Activated T-helper 2 cell treated with anti-CD3 and anti-CD28 coated beads, Interferon-gamma antibody, Interleukin-2, Interleukin-4, amounts not matched to agents 10 μg/mL and 5 μg/mL and 100 μg/mL, durations not matched to agents 14 hours and 24 hours and 36 hours (primary cell): ENCODE measurements at regions of chr9 and their contacts with region 1.

Region 1: GRCh38 chr9:127555768-127556397 is 56.2 kb upstream of the STXBP1 start:
- DNase-seq: peak; percentile 65
- H3K4me3 Mint-ChIP-seq: peak overlapping the region; percentile 19
- H3K27ac Mint-ChIP-seq: peak overlapping the region; percentile 73
- H3K4me1 Mint-ChIP-seq: peaks cover 38% of the 10 kb centered on the region
- H3K27me3 Mint-ChIP-seq: no peaks in the 10 kb centered on the region

Region 2: GRCh38 chr9:127578955-127579853 is 23.3 kb after region 1 on chr9:
- intact Hi-C with region 1: loop called (anchors 2 kb)
- DNase-seq: peak; percentile 70
- H3K4me3 Mint-ChIP-seq: peak overlapping the region; percentile 87
- H3K27ac Mint-ChIP-seq: peak overlapping the region; percentile 90
- H3K4me1 Mint-ChIP-seq: peaks cover 42% of the 10 kb centered on the region
- H3K27me3 Mint-ChIP-seq: no peaks in the 10 kb centered on the region

Region 3: GRCh38 chr9:127651697-127652610 is 96.1 kb after region 1 on chr9:
- intact Hi-C with region 1: no loop called
- DNase-seq: no peak
- H3K4me3 Mint-ChIP-seq: no peak overlapping the region
- H3K27ac Mint-ChIP-seq: no peak overlapping the region
- H3K4me1 Mint-ChIP-seq: no peaks in the 10 kb centered on the region
- H3K27me3 Mint-ChIP-seq: no peaks in the 10 kb centered on the region